ENCODE measurements at regions of chr3 and their contacts with region 1.

Region 1: DNA sequence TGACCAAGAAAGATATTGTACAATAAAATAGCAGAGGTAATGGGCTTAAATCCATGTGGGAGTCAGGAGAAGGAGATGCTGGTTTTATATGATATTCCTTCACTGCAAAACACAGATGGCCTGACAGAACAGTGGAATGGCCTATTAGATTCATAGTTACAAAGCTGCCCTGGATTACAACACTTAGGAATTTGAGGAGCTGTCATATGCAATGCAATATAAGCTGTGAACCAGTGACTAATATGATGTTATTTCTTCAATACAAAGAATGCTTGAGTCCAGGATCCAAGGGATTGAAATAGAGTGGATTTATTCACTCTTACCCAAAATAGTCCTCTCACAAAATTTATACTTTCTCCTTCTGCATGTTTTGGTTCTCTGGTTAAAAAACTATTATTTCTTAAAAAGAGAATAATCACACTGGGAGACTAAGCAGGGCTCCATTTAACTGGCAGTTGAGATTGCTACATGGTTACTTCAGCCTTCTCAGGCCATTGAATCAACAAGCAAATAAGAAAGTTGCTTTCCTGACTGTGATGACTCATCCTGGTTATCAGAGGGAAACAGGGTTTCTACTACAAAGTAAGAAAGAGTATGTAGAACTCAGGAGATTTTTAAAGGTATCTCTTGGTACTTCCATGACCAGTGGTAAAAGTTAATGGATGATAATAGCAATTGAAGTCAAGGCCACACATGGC is 79.8 kb upstream of the ZPLD1 start:
- DNase-seq: peak; percentile 17 to 72
- H3K4me3 ChIP-seq: no peak overlapping the region
- H3K27ac ChIP-seq: peak overlapping the region; percentile 76
- H3K4me1 ChIP-seq: peaks cover 23% of the 10 kb centered on the region
- H3K27me3 ChIP-seq: no peaks in the 10 kb centered on the region
- CTCF ChIP-seq: no peak

Region 2: DNA sequence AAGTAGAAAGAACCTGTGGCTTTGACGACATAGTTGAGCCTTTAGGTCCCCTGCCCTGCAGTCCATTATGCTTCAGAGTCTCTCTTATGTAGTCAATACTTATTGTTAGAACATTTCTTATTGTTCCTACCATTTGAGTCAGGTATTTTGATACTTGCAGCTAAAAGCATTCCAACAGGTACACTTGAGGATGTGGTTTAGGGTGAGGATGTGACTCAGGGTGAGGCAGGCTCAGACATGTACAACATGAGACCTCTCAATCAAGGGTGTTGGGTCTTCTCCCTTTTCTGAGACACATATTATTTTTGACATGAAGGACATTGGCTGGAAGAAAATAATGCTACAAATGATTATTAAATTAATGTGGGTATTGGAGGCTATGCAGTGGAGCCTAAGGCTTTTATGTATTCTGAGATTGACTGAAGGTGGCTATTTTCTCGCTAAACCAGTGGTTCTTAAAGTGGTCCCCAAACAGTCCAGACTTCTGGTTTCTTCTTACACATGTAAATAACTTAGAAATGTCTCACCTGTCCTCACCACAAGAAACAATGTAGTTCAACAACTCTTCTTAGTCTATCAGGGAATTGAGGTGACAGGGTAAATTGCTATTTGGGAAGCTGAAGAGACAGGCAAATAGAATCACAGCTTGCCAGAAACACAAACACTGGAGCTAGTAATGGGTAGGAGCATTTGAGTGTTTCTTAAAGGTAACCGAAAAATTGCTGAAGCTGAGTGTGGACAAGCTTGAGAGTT is 55.7 kb before region 1 on chr3:
- CTCF ChIA-PET with region 1: no interaction called
- POLR2A ChIA-PET with region 1: interaction called, 8 read pairs
- intact Hi-C with region 1: loop called (anchors 1 kb)
- DNase-seq: peak; percentile 54 to 82
- H3K4me3 ChIP-seq: no peak overlapping the region
- H3K27ac ChIP-seq: peak overlapping the region; percentile 85
- H3K4me1 ChIP-seq: peaks cover 40% of the 10 kb centered on the region
- H3K27me3 ChIP-seq: no peaks in the 10 kb centered on the region
- CTCF ChIP-seq: no peak

Region 3: GRCh38 chr3:102332205-102332604 is 22.8 kb before region 1 on chr3:
- CTCF ChIA-PET with region 1: no interaction called
- POLR2A ChIA-PET with region 1: no interaction called
- intact Hi-C with region 1: no loop called
- DNase-seq: no peak
- H3K4me3 ChIP-seq: no peak overlapping the region
- H3K27ac ChIP-seq: no peak overlapping the region
- H3K4me1 ChIP-seq: no peaks in the 10 kb centered on the region
- H3K27me3 ChIP-seq: no peaks in the 10 kb centered on the region
- CTCF ChIP-seq: no peak

Region 4: DNA sequence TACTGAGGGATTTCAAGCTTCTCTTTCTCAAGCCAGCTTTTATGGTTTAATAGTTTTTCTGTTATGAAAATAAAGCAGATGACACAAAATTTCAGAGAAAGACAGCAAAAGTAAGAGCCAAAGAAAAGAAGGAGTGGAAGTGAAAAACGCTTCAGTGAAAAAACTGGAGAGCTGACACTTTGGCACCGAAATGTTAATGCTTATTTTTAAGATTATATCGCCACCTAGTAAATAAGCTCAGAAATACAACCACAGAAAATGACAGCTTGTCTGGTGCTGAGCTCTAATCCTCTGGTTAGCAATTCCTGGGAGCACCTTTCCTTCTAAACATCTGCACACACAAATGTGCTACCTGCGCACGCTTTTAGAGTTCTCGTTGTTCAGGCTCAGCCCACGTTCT is 181.5 kb after region 1 on chr3:
- CTCF ChIA-PET with region 1: no interaction called
- POLR2A ChIA-PET with region 1: no interaction called
- intact Hi-C with region 1: loop called (anchors 10 kb)
- DNase-seq: peak in 1 of 2 experiments; percentile 50
- H3K4me3 ChIP-seq: no peak overlapping the region; the same call in 1 of the 2 replicates
- H3K27ac ChIP-seq: no peak overlapping the region
- H3K4me1 ChIP-seq: peaks cover 9% of the 10 kb centered on the region; the same call in 1 of the 2 replicates
- H3K27me3 ChIP-seq: no peaks in the 10 kb centered on the region
- CTCF ChIP-seq: peak; percentile 78

Measured in PC-9 (cell line).